Activated CD8-positive, alpha-beta T cell treated with anti-CD3 and anti-CD28 coated beads for 36 hours (primary cell): ENCODE measurements at regions of chr3 and their contacts with region 1.

Region 1: DNA sequence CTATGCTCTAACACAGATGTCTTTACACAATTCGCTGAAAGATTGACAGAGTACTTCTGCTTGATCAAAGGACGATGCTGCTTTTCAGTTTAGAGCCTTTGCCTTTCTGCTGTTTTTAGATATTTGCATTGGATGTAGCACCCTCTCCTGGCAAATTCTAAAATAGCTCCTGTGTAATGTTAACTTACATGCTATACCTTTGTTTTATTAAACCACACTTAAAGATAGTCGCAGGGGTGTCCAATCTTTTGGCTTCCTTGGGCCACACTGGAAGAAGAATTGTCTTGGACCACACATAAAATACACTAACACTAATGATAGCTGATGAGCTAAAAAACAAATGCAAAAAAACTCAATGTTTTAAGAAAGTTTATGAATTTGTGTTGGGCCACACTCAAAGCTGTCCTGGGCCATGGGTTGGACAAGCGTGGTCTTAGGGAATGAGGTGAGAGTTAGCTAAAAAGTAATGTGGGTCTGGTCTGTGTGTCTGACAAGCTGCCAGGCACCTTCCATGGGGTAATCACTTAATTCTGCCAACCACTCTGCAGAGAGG is 62.9 kb downstream of the ATG7 start:
- DNase-seq: peak; percentile 19
- ATAC-seq: peak; percentile 79
- H3K4me3 Mint-ChIP-seq: no peak overlapping the region
- H3K27ac Mint-ChIP-seq: no peak overlapping the region
- H3K4me1 Mint-ChIP-seq: peaks cover 7% of the 10 kb centered on the region
- H3K27me3 Mint-ChIP-seq: no peaks in the 10 kb centered on the region
- CTCF ChIP-seq: peak; percentile 59

Region 2: GRCh38 chr3:11236595-11237461 is 98.3 kb before region 1 on chr3:
- CTCF ChIA-PET with region 1: interaction called, 36 read pairs
- POLR2A ChIA-PET with region 1: interaction called, 4 read pairs
- intact Hi-C with region 1: loop called (anchors 2 kb)
- DNase-seq: peak; percentile 89
- ATAC-seq: no peak
- H3K4me3 Mint-ChIP-seq: no peak overlapping the region
- H3K27ac Mint-ChIP-seq: peak overlapping the region; percentile 30
- H3K4me1 Mint-ChIP-seq: peaks cover 39% of the 10 kb centered on the region
- H3K27me3 Mint-ChIP-seq: peaks cover 15% of the 10 kb centered on the region
- CTCF ChIP-seq: peak; percentile 90

Region 3: DNA sequence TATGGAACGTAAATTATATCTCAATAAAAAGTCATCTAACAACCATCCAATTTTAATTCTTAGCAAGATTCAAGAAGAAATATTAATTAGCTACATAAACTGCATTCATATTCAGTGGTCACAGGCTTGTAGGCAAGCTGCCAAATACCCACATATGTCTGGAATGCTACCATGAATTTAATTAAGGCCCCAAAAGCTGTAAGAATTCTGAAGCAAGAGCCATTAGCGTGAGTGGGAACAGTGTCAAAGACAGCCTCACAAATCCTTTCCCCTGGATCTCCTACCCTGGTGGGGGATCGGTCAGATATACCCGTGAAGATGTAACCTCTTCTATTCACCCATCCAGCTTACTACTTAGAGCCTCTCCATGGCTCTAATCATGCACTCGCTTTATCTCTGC is 23.0 kb before region 1 on chr3:
- CTCF ChIA-PET with region 1: interaction called, 10 read pairs
- POLR2A ChIA-PET with region 1: no interaction called
- intact Hi-C with region 1: no loop called
- DNase-seq: no peak
- ATAC-seq: no peak
- H3K4me3 Mint-ChIP-seq: no peak overlapping the region
- H3K27ac Mint-ChIP-seq: no peak overlapping the region
- H3K4me1 Mint-ChIP-seq: peaks cover 4% of the 10 kb centered on the region
- H3K27me3 Mint-ChIP-seq: no peaks in the 10 kb centered on the region
- CTCF ChIP-seq: no peak

Region 4: GRCh38 chr3:11350374-11350773 is 15.2 kb after region 1 on chr3:
- CTCF ChIA-PET with region 1: interaction called, 16 read pairs
- POLR2A ChIA-PET with region 1: interaction called, 3 read pairs
- intact Hi-C with region 1: no loop called
- DNase-seq: no peak
- ATAC-seq: no peak
- H3K4me3 Mint-ChIP-seq: no peak overlapping the region
- H3K27ac Mint-ChIP-seq: no peak overlapping the region
- H3K4me1 Mint-ChIP-seq: no peaks in the 10 kb centered on the region
- H3K27me3 Mint-ChIP-seq: no peaks in the 10 kb centered on the region
- CTCF ChIP-seq: no peak

Region 5: DNA sequence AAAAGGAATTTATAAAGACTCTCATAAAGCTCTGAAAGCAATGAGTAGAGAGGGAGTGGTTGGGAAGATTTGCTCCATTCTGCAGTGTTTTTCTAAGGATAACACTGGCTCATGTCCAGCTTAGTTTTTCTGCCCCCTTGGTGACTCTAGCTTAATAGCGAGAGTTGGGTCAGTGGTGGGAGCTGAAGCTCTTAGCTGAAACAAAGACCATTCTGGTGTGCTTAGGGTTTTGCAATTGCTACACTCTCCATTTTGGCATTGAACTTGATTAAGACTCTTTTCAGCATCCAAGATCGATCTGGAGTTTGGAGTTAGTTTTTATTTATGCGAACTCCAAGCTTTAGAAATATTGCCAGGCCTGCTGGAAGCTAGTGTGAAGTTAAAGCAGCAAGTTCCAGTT is 35.1 kb after region 1 on chr3:
- CTCF ChIA-PET with region 1: no interaction called
- POLR2A ChIA-PET with region 1: no interaction called
- intact Hi-C with region 1: no loop called
- DNase-seq: no peak
- ATAC-seq: no peak
- H3K4me3 Mint-ChIP-seq: no peak overlapping the region
- H3K27ac Mint-ChIP-seq: no peak overlapping the region
- H3K4me1 Mint-ChIP-seq: no peaks in the 10 kb centered on the region
- H3K27me3 Mint-ChIP-seq: no peaks in the 10 kb centered on the region
- CTCF ChIP-seq: no peak